CD14-positive monocyte (primary cell): ENCODE measurements at regions of chr11 and their contacts with region 1.

Region 1: DNA sequence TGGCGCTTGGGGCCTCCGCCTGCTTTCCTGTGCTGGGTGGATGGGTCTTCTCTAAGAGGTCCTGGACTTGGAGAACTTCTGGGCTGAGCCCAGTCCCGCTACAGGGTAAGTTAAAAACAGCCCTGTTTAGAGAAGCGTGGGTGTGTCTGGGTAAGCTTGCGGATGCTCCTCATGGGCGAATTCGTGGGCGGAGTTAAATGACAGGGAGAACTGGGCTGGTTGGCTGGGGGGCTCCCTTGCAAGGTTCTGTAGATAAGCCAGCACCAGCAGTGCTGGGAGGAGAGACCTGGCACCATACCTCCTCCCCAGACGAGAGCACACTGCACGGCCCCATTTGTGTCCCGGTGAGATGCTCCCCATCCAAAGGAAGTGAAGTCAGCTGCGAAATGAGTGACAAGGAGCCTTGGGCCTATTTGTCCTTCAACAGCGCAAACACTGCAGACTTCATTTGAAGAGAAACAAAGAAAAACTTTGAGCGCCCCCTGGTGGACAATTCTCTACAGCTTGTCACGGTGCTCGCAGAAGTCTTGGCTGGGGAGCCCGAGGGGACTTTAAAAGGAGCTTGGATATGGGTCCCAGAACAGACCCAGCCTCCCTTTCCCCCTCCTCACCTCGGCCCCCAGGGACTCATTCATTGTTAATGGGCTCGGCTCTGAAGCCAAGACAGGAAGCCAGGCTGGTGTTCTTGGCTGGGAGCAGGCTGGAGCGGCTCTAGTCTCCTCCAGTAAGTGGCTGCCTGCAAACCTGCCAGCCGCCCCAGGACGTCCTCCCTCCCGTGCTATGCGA is 39.5 kb downstream of the TP53I11 start:
- DNase-seq: peak; percentile 50 to 74 (median 70)
- H3K4me3 ChIP-seq: no peak overlapping the region
- H3K4me3 Mint-ChIP-seq: peak overlapping the region in 1 of 2 donors; percentile 39
- H3K27ac ChIP-seq: no peak overlapping the region
- H3K27ac Mint-ChIP-seq: no peak overlapping the region
- H3K4me1 ChIP-seq: peaks cover 12 to 13% of the 10 kb centered on the region in 2 donors
- H3K4me1 Mint-ChIP-seq: peaks cover 10% of the 10 kb centered on the region
- H3K27me3 ChIP-seq: peaks cover 0 to 2% of the 10 kb centered on the region in 2 donors
- H3K27me3 Mint-ChIP-seq: peaks cover 14 to 15% (median 14%) of the 10 kb centered on the region in 3 donors
- CTCF ChIP-seq: peak; percentile 85

Region 2: DNA sequence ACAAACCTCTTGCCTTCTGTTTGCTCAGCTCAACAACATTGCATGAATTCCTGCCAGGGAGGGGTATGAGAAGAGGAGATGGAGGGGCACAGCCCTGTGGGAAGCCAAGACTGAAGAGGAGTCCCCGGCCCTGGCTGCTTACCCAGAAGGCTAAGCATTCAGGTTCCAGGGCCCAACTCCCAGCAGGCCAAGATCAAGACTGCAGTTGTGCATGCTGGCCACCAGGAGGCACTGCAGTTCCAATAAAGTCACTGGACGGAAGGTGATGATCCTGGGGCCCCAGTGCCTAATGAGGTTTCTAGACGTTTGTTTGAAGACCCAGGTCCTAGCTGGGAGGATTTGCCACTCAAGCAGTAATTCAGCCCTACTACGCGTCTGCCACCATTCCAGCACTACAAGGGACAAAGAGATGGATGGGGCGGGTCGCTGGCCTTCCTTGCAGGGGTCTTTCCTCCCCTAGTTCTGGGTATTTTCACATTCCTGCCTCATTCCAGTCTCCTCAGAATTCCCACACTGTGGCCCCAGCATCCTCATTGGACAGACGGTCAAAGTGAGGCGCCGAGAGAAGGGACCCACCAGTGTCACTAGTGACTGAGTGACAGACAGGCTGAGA is 624.8 kb before region 1 on chr11:
- intact Hi-C with region 1: loop called (anchors 5 to 10 kb)
- DNase-seq: peak; percentile 28 to 54 (median 39)
- H3K4me3 ChIP-seq: no peak overlapping the region
- H3K4me3 Mint-ChIP-seq: no peak overlapping the region
- H3K27ac ChIP-seq: no peak overlapping the region
- H3K27ac Mint-ChIP-seq: no peak overlapping the region
- H3K4me1 ChIP-seq: no peaks in the 10 kb centered on the region
- H3K4me1 Mint-ChIP-seq: no peaks in the 10 kb centered on the region
- H3K27me3 ChIP-seq: no peaks in the 10 kb centered on the region
- H3K27me3 Mint-ChIP-seq: peaks cover 12 to 20% (median 17%) of the 10 kb centered on the region in 3 donors
- CTCF ChIP-seq: peak; percentile 98

Region 3: GRCh38 chr11:44565211-44565952 is 345.8 kb before region 1 on chr11 and contains the start of gene CD82:
- intact Hi-C with region 1: loop called in 1 of 2 experiments (anchors 10 kb)
- DNase-seq: peak; percentile 98 to 99 (median 99)
- H3K4me3 ChIP-seq: peak within 1 kb of the TSS; percentile 61 to 76 (median 76)
- H3K4me3 Mint-ChIP-seq: peak within 1 kb of the TSS; percentile 85 to 86
- H3K27ac ChIP-seq: peak within 1 kb of the TSS; percentile 98 to 99
- H3K27ac Mint-ChIP-seq: peak within 1 kb of the TSS; percentile 96 to 99 (median 97)
- H3K4me1 ChIP-seq: peaks cover 65% of the 10 kb centered on the region in 2 donors
- H3K4me1 Mint-ChIP-seq: peaks cover 64% of the 10 kb centered on the region
- H3K27me3 ChIP-seq: no peaks in the 10 kb centered on the region
- H3K27me3 Mint-ChIP-seq: peaks cover 3 to 5% (median 3%) of the 10 kb centered on the region in 3 donors
- CTCF ChIP-seq: peak; percentile 31
- polyA plus RNA-seq, gene CD82: 40.8 to 89.0 (median 43.0) TPM

Region 4: GRCh38 chr11:44621140-44621681 is 290.0 kb before region 1 on chr11:
- intact Hi-C with region 1: loop called (anchors 5 kb)
- DNase-seq: peak; percentile 36 to 57 (median 56)
- H3K4me3 ChIP-seq: no peak overlapping the region
- H3K4me3 Mint-ChIP-seq: no peak overlapping the region
- H3K27ac ChIP-seq: no peak overlapping the region
- H3K27ac Mint-ChIP-seq: no peak overlapping the region
- H3K4me1 ChIP-seq: peaks cover 21 to 28% of the 10 kb centered on the region in 2 donors
- H3K4me1 Mint-ChIP-seq: peaks cover 40% of the 10 kb centered on the region
- H3K27me3 ChIP-seq: no peaks in the 10 kb centered on the region
- H3K27me3 Mint-ChIP-seq: peaks cover 12 to 19% (median 16%) of the 10 kb centered on the region in 3 donors
- CTCF ChIP-seq: peak; percentile 94

Region 5: GRCh38 chr11:44627911-44628729 is 283.1 kb before region 1 on chr11:
- intact Hi-C with region 1: loop called (anchors 5 kb)
- DNase-seq: peak in 1 of 3 donors; percentile 6
- H3K4me3 ChIP-seq: no peak overlapping the region
- H3K4me3 Mint-ChIP-seq: peak overlapping the region in 1 of 2 donors; percentile 16
- H3K27ac ChIP-seq: no peak overlapping the region
- H3K27ac Mint-ChIP-seq: no peak overlapping the region
- H3K4me1 ChIP-seq: peaks cover 19 to 25% of the 10 kb centered on the region in 2 donors
- H3K4me1 Mint-ChIP-seq: peaks cover 48% of the 10 kb centered on the region
- H3K27me3 ChIP-seq: no peaks in the 10 kb centered on the region
- H3K27me3 Mint-ChIP-seq: peaks cover 28 to 35% (median 31%) of the 10 kb centered on the region in 3 donors
- CTCF ChIP-seq: no peak

Region 6: GRCh38 chr11:44727373-44728287 is 183.6 kb before region 1 on chr11:
- intact Hi-C with region 1: loop called (anchors 1 to 2 kb)
- DNase-seq: peak; percentile 33 to 55 (median 40)
- H3K4me3 ChIP-seq: peak overlapping the region in 2 of 3 experiments; percentile 5 to 67
- H3K4me3 Mint-ChIP-seq: peak overlapping the region; percentile 73 to 81
- H3K27ac ChIP-seq: no peak overlapping the region
- H3K27ac Mint-ChIP-seq: peak overlapping the region in 2 of 7 donors; percentile 54 to 57
- H3K4me1 ChIP-seq: peaks cover 13 to 14% of the 10 kb centered on the region in 2 donors
- H3K4me1 Mint-ChIP-seq: peaks cover 13% of the 10 kb centered on the region
- H3K27me3 ChIP-seq: peaks cover 27 to 62% of the 10 kb centered on the region in 2 donors
- H3K27me3 Mint-ChIP-seq: peaks cover 45 to 71% (median 69%) of the 10 kb centered on the region in 3 donors
- CTCF ChIP-seq: peak; percentile 94

Region 7: GRCh38 chr11:44939673-44940395 is 28.6 kb after region 1 on chr11:
- intact Hi-C with region 1: no loop called
- DNase-seq: peak in 2 of 3 donors; percentile 48 to 51
- H3K4me3 ChIP-seq: no peak overlapping the region
- H3K4me3 Mint-ChIP-seq: peak overlapping the region; percentile 9 to 67
- H3K27ac ChIP-seq: no peak overlapping the region
- H3K27ac Mint-ChIP-seq: peak overlapping the region in 4 of 7 donors; percentile 26 to 82 (median 36)
- H3K4me1 ChIP-seq: peaks cover 30 to 37% of the 10 kb centered on the region in 2 donors
- H3K4me1 Mint-ChIP-seq: peaks cover 42% of the 10 kb centered on the region
- H3K27me3 ChIP-seq: no peaks in the 10 kb centered on the region
- H3K27me3 Mint-ChIP-seq: peaks cover 0 to 5% (median 4%) of the 10 kb centered on the region in 3 donors
- CTCF ChIP-seq: peak; percentile 46

Region 8: DNA sequence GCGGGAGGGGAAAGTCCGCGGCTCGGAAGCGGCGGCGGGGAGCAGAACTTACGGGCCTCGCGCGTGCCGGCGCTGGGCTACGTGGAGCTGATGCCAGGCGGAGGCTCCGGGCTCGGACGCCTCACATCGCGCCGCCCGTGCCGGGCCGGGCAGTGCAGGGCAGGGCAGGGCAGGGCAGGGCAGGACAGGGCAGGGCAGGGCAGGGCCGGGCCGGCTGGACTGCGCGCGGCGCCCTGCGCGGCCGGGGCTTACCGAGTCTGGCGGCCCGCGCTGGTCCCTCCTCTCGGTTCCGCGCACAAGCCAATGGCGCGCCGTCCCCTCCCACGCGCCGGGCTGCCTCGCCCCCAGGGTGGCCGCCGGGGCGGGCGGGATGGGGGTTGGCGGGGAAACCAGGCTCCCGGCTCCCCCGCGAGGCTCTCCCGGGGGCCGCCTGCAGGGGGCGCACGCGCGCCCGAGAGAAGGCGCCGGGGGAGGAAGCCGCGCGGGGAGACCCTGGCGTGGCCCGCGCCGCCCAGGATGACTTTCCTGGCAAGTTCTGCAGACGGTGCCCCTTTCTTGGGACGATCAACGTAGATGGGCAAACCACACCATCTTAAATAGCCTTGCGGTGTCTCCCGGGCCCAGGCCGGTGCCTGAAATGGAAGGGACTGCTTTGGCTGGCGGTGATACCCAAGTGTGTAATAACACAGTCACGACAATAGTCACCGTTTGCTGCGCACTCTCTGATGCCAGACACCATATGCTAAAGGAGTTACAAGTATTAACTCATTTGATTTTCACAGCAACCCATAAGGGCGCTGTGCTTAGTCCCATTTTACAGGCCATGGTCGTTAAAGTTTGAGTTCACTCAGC is 39.6 kb after region 1 on chr11 and contains the start of gene TP53I11:
- intact Hi-C with region 1: no loop called
- DNase-seq: peak; percentile 44 to 56 (median 48)
- H3K4me3 ChIP-seq: peak within 1 kb of the TSS; percentile 75 to 92 (median 84)
- H3K4me3 Mint-ChIP-seq: peak within 1 kb of the TSS; percentile 84 to 89
- H3K27ac ChIP-seq: peak within 1 kb of the TSS in 1 of 2 donors; percentile 79
- H3K27ac Mint-ChIP-seq: peak within 1 kb of the TSS in 6 of 7 donors; percentile 26 to 72 (median 68)
- H3K4me1 ChIP-seq: peaks cover 39 to 57% of the 10 kb centered on the region in 2 donors
- H3K4me1 Mint-ChIP-seq: peaks cover 52% of the 10 kb centered on the region
- H3K27me3 ChIP-seq: peaks cover 0 to 3% of the 10 kb centered on the region in 2 donors
- H3K27me3 Mint-ChIP-seq: peaks cover 3 to 15% (median 5%) of the 10 kb centered on the region in 3 donors
- CTCF ChIP-seq: peak; percentile 82
- polyA plus RNA-seq, gene TP53I11: 11.0 to 13.2 (median 11.3) TPM

Region 9: GRCh38 chr11:45097721-45098493 is 186.7 kb after region 1 on chr11:
- intact Hi-C with region 1: no loop called
- DNase-seq: peak; percentile 35 to 49 (median 48)
- H3K4me3 ChIP-seq: no peak overlapping the region
- H3K4me3 Mint-ChIP-seq: no peak overlapping the region
- H3K27ac ChIP-seq: no peak overlapping the region
- H3K27ac Mint-ChIP-seq: no peak overlapping the region
- H3K4me1 ChIP-seq: peaks cover 11 to 19% of the 10 kb centered on the region in 2 donors
- H3K4me1 Mint-ChIP-seq: peaks cover 30% of the 10 kb centered on the region
- H3K27me3 ChIP-seq: peaks cover 0 to 6% of the 10 kb centered on the region in 2 donors
- H3K27me3 Mint-ChIP-seq: peaks cover 16 to 24% (median 17%) of the 10 kb centered on the region in 3 donors
- CTCF ChIP-seq: no peak